Dorsolateral prefrontal cortex (tissue), 120 donors: ENCODE measurements at regions of chr19 and their contacts with region 1.

Region 1: DNA sequence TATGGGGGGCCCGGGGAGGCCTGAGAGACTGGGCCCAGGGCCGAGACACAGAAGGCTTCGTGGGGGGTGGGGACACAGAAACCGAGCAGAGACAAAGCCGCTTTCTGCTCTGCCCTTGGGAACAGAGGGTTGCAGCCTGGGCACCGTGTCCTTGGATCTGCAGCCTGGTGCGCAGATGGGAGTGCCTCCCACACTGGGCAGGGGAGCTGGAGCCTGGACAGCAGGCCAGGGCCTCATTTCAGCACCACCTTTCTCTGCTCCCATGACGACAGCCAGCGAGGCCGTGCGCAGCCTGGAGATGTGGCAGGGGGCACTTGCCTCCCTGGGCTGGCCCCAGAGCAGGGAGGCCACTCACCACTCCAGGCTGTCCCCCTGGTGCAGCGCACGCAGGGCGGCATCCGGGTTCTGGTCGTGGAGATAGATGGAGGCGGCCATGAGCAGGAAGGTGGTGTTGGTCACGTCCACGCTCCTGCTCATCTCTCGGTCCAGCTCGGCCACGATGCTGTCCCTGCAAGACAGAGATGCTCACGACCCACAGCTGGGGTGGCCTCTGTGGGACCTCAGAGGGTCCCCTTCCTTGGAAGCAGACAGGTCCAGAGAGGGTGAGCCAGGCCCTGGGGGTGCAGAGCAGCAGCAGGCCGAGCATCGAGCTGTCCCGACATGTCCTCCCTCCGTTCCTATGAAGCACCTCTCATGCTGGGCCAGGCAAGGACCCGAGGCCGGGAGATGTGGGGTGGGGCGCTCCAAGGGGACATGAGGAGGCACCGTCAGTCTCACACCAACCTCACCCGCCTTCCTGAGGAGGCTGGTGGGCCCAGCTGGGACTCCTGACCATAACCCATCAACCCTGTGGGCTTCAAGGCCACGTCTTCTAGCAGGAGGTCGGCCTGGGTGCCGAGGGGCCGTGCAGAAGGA is 10.9 kb upstream of the CERS1 start:
- DNase-seq: peak; percentile 41 to 90 (median 84)
- H3K4me3 ChIP-seq: peak overlapping the region in 10 of 59 donors; percentile 1 to 35 (median 12)
- H3K27ac ChIP-seq: peak overlapping the region; percentile 46 to 96 (median 87)
- H3K27me3 ChIP-seq: no peaks in the 10 kb centered on the region
- CTCF ChIP-seq: peak in 7 of 56 donors; percentile 7 to 23 (median 17)

Region 2: GRCh38 chr19:18865973-18866799 is 40.7 kb before region 1 on chr19:
- intact Hi-C with region 1: loop called in 1 of 2 experiments (anchors 5 kb)
- DNase-seq: peak in 8 of 10 donors; percentile 54 to 84 (median 64)
- H3K4me3 ChIP-seq: peak overlapping the region in 2 of 59 donors; percentile 1 to 12
- H3K27ac ChIP-seq: peak overlapping the region in 43 of 59 donors; percentile 2 to 71 (median 50)
- H3K27me3 ChIP-seq: peaks cover 0 to 3% (median 0%) of the 10 kb centered on the region in 45 donors
- CTCF ChIP-seq: peak; percentile 82 to 100 (median 98)

Region 3: DNA sequence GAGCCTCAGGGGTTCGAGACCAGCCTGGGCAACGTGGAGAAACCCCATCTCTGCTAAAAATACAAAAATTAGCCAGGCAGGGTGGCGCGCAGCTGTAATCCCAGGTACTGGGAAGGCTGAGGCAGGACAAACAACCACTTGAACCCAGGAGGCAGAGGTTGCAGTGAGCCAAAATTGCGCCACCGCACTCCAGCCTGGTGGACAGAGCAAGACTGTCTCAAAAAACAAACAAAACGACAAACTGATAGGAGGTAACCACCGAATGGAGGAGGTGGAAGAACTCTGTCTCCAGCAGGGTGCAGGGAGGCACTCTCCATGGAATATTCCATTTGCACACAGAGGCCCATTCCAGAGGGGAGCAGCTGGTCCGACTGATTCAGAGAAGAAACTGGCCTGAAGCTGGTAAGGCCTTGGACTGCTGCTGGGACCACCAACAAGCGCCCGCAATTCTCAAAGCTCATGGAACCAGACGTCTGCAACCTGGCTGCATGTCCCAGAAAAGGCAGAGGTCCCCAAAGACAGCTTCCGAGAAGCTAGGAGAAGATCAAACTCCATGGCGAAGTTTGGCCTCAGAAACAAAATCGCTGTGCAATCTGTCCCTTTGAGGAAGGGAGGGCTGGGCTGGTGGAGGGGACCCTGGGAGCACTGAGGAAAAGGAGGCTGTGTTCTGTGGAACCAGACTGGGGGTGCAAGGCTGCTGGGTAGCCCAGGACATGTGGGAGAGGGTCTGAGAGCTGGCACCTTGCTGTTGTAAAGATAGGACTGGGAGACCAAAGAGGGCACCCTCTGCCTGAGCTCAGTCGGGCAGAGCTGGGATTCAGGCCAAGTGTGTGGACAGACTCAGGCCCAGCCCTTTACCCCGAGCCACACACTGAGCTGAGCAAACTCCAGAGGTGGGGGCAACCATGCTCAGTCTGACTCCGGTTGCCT is 192.1 kb after region 1 on chr19:
- intact Hi-C with region 1: no loop called
- DNase-seq: no peak
- H3K4me3 ChIP-seq: no peak overlapping the region
- H3K27ac ChIP-seq: no peak overlapping the region
- H3K27me3 ChIP-seq: no peaks in the 10 kb centered on the region
- CTCF ChIP-seq: no peak